Heart left ventricle (tissue), 16 donors: ENCODE measurements at regions of chr6 and their contacts with region 1.

Region 1: GRCh38 chr6:84227434-84228197 is at the start of gene CEP162:
- DNase-seq: peak; percentile 91 to 95 (median 92)
- ATAC-seq: peak; percentile 96 to 99 (median 98)
- H3K4me3 ChIP-seq: peak within 1 kb of the TSS; percentile 60 to 91 (median 78)
- H3K27ac ChIP-seq: peak within 1 kb of the TSS; percentile 62 to 97 (median 81)
- H3K4me1 ChIP-seq: peaks cover 0 to 14% (median 7%) of the 10 kb centered on the region in 12 donors
- H3K27me3 ChIP-seq: peaks cover 0 to 12% (median 0%) of the 10 kb centered on the region in 9 donors
- CTCF ChIP-seq: peak in 11 of 12 donors; percentile 53 to 89 (median 69)
- POLR2A ChIP-seq: peak in 1 of 2 donors; percentile 44
- total RNA-seq, gene CEP162: 2.6 to 5.6 (median 4.7) TPM

Region 2: GRCh38 chr6:83615025-83615999 is 612.3 kb before region 1 on chr6:
- intact Hi-C with region 1: loop called in 4 of 10 experiments (anchors 5 to 10 kb)
- DNase-seq: no peak
- ATAC-seq: no peak
- H3K4me3 ChIP-seq: no peak overlapping the region
- H3K27ac ChIP-seq: no peak overlapping the region
- H3K4me1 ChIP-seq: no peaks in the 10 kb centered on the region
- H3K27me3 ChIP-seq: no peaks in the 10 kb centered on the region
- CTCF ChIP-seq: peak; percentile 17 to 59 (median 50)
- POLR2A ChIP-seq: no peak

Region 3: DNA sequence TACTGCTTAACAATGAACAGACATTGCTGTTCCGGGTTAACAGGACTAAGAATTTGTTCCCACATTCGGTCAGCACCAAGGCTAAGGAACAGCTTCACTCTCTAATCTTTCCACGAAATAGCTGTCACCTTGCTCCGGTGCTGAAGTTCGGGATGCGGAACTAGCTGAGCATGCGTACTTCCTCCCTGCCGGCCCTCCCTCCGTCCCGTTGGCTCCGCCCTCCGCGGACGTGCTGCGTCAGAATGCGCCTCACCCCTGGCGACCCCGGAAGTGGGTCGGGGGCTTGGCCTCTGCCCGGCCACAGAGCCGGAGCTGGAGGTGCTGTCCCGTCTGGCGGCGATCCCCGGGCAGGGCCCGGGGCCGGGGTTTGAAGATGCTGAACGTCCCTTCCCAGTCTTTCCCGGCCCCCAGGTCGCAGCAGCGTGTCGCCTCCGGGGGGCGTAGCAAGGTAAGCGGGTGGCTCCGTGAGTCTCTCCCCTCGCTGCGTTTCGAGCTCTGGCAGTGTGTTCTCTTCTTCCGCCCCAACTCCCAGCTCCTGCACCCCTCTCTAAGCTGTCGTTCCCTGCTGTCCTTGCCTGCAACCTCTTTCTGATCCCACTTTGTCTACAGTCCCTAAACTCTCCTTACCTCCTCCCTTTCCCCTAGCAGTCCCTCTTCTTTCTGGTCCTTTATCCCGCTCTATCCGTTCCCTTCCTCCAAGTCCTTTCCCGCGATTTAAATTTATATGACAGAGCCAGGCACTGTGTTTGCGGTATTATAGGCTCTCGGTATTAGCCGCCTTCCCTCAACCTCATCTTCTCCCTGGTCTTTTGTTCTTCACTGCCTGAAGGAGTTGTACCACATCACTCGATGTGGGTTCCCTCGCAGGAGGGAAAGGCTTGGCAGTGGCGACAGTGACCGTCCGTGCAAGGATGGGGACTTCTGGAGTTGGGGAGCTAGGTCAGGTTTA is 367.9 kb before region 1 on chr6 and contains the start of gene CYB5R4:
- intact Hi-C with region 1: loop called in 1 of 10 experiments (anchors 5 kb)
- DNase-seq: peak; percentile 93 to 97 (median 96)
- ATAC-seq: peak; percentile 99 to 100 (median 100)
- H3K4me3 ChIP-seq: peak within 1 kb of the TSS; percentile 65 to 94 (median 82)
- H3K27ac ChIP-seq: peak within 1 kb of the TSS in 11 of 12 donors; percentile 72 to 92 (median 87)
- H3K4me1 ChIP-seq: peaks cover 0 to 30% (median 14%) of the 10 kb centered on the region in 12 donors
- H3K27me3 ChIP-seq: peaks cover 0 to 12% (median 0%) of the 10 kb centered on the region in 9 donors
- CTCF ChIP-seq: peak in 10 of 12 donors; percentile 15 to 64 (median 43)
- POLR2A ChIP-seq: peak in 1 of 2 donors; percentile 91
- total RNA-seq, gene CYB5R4: 4.6 to 29.0 (median 15.6) TPM

Region 4: DNA sequence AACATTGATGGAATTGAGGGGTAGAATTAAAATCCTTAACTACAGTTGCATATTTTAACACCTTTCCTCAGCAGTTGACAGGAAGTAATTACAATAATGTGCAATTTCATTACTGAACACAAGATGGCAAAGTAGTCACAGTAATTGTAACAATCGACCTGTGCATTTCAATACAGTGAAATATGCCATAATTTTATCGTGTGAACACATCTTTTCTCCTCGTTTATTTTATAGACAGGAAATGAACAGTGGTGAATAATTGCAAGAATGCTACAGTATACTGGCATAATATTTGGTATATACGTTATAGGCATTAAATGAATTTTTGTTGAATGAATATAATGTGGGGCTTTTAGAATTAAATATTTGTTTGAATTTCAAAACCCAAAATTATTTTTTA is 343.1 kb before region 1 on chr6:
- intact Hi-C with region 1: loop called in 7 of 10 experiments (anchors 2 to 5 kb)
- DNase-seq: no peak
- ATAC-seq: peak in 2 of 4 donors; percentile 46 to 50
- H3K4me3 ChIP-seq: no peak overlapping the region
- H3K27ac ChIP-seq: no peak overlapping the region
- H3K4me1 ChIP-seq: peaks cover 0 to 5% (median 0%) of the 10 kb centered on the region in 12 donors
- H3K27me3 ChIP-seq: no peaks in the 10 kb centered on the region
- CTCF ChIP-seq: peak; percentile 50 to 82 (median 67)
- POLR2A ChIP-seq: no peak

Region 5: DNA sequence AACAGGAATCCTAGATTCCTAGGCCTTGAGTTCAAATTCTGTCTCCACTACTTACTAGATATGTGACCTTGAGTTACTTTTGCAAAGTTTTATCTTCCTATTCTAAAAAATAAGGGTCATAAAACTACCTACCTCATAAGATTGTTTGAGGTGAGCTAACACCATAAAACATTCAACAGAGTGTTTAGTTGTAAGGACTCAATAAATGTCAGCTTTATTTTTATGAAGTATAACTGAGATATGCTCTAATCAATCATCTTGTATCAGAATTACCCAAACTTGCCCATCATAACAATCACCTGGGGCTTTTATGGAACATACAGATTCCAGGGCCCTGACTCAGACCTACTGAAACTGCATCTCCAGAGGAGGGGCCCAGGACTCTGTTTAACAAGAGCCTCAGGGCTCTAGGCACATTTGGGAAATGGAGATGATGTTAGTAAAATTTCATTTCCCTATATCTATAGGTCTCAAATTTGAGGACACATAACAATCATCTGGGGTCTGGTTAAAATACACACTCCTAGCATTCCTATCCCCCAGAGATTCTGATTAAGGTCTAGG is 229.5 kb before region 1 on chr6:
- intact Hi-C with region 1: no loop called
- DNase-seq: no peak
- ATAC-seq: no peak
- H3K4me3 ChIP-seq: no peak overlapping the region
- H3K27ac ChIP-seq: no peak overlapping the region
- H3K4me1 ChIP-seq: no peaks in the 10 kb centered on the region
- H3K27me3 ChIP-seq: no peaks in the 10 kb centered on the region
- CTCF ChIP-seq: no peak
- POLR2A ChIP-seq: no peak